K562 (cell line): ENCODE measurements at regions of chr1 and their contacts with region 1.

Region 1: GRCh38 chr1:162357681-162358266 is 18.9 kb downstream of the SPATA46 start:
- DNase-seq: peak; percentile 65 to 84 (median 72)
- ATAC-seq: peak; percentile 87
- H3K4me3 ChIP-seq: no peak overlapping the region
- H3K27ac ChIP-seq: no peak overlapping the region; the same call in 1 of the 3 replicates
- H3K4me1 ChIP-seq: peaks cover 9 to 33% of the 10 kb centered on the region in 2 experiments; a peak in 4 of 5 replicates
- H3K27me3 ChIP-seq: no peaks in the 10 kb centered on the region
- CTCF ChIP-seq: peak; percentile 74 to 89 (median 76)
- EP300 ChIP-seq: no peak
- POLR2A ChIP-seq: no peak
- RAD21 ChIP-seq: peak; percentile 74 to 88

Region 2: DNA sequence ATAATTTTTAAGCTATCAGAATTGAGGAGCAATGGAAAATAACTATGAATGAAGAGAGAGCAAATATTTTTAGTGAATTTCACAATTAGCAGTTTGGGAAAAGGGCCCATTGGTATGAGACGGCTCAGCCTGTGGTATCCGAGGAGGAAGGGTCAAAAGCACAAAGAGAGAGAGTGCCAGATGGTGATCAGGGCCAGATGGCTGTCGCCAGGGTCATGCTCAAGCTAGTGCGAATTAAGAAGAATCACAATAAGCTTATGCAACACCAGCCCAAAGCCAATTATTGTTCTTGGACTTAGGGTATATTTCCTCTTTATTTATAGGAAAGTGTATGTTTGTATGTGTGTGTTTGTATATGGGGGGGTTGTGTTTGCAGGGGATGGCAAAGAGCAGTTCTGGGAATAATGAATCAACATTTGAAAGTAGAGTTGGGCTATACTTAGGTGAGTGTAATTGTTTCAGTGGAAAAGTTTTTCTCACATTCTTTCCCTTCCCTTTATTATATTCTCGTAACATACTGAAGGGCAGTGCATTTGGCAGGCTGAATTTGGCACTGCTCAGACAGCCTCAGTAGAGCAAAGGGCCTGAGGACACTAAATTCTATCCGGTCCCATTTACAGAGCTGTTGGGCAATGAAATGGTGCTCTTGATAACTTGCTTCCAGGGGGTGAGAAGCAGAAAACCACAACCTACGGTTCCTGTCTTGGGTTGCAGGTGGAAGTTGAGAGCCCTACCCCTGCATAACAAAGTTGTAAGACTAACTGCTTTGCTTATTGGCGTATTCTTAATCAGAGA is 255.0 kb after region 1 on chr1:
- CTCF ChIA-PET with region 1: no interaction called
- POLR2A ChIA-PET with region 1: no interaction called
- in situ Hi-C with region 1: no loop called
- intact Hi-C with region 1: loop called (anchors 10 kb)
- DNase-seq: no peak
- ATAC-seq: peak; percentile 33
- H3K4me3 ChIP-seq: no peak overlapping the region
- H3K27ac ChIP-seq: no peak overlapping the region
- H3K4me1 ChIP-seq: no peaks in the 10 kb centered on the region
- H3K27me3 ChIP-seq: no peaks in the 10 kb centered on the region
- CTCF ChIP-seq: no peak
- EP300 ChIP-seq: no peak
- POLR2A ChIP-seq: no peak
- RAD21 ChIP-seq: no peak